Cardiac septum (tissue), 1 donor: ENCODE measurements at regions of chr11 and their contacts with region 1.

Region 1: GRCh38 chr11:74018331-74019005 is 9.6 kb upstream of the UCP3 start:
- DNase-seq: peak; percentile 93

Region 2: DNA sequence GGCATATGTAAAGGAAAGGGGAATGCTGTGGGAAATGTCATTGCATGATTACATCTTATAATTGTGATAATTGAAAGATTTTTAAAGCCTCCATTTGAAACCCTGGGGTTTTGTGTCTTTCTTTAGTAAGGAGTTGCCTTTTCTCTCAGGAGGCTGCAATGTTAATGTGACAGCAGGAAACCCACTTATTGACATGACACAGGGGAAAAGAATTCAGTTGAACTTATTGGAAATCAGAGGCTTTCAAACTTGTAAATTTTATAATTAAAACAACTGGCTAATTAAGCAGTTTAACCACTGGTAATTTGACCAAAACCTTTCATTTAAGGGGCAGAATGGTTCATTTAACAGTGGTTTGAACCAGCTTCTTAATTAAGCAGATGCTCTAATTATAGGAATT is 199.6 kb before region 1 on chr11:
- intact Hi-C with region 1: no loop called
- DNase-seq: no peak

Region 3: GRCh38 chr11:73982969-73983740 is 35.3 kb before region 1 on chr11:
- intact Hi-C with region 1: loop called (anchors 5 kb)
- DNase-seq: peak; percentile 97